ENCODE measurements at regions of chr15 and their contacts with region 1.

Region 1: DNA sequence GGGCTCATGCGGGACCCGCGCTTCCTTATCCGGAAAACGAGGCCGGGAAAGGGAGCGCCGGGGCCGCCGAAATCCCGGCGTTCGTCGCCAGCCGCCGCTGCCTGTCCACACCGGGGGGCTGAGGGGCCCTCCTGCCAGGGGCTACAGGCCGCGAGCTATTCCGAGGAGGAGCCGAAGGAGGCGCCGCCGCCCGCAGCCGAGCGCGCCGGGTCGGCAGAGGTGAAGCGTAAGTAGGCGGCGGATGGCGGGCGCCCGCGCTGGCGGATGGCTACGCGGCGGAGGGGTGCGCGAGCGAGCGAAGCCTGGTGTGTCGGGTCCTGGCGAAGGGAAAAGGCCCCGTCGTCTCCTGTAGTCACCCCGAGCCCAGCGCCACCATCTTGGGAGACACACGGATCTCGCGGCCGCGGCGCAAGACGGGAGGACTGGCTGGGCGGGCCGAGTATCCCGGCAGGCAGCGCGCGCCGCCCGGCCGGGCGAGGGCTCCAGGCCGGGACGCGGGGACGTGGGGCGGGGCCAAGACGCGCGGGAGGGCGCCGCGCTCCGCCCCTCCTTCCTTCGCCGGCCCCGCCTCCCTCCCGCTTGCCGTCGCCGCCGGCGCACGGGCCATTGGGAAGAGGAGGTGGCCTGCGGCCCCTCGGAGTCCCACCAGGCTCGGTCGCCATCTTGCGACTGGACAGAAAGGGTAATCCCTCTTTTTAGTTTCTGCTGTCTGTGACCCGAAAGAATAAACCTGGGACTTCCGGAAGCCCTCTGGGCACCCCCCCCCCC is at the start of gene UBE3A:
- DNase-seq: peak; percentile 91 to 93 (median 92)
- H3K4me3 ChIP-seq: peak within 1 kb of the TSS; percentile 75 to 99 (median 84)
- H3K27ac ChIP-seq: peak within 1 kb of the TSS; percentile 84 to 100 (median 99)
- H3K4me1 ChIP-seq: peaks cover 10 to 33% of the 10 kb centered on the region in 2 donors
- H3K27me3 ChIP-seq: no peaks in the 10 kb centered on the region
- CTCF ChIP-seq: peak in 3 of 6 experiments; percentile 21 to 33 (median 26)
- POLR2A ChIP-seq: peak; percentile 42 to 84
- total RNA-seq, gene UBE3A: 32.5 to 114 (median 85.8) TPM

Region 2: DNA sequence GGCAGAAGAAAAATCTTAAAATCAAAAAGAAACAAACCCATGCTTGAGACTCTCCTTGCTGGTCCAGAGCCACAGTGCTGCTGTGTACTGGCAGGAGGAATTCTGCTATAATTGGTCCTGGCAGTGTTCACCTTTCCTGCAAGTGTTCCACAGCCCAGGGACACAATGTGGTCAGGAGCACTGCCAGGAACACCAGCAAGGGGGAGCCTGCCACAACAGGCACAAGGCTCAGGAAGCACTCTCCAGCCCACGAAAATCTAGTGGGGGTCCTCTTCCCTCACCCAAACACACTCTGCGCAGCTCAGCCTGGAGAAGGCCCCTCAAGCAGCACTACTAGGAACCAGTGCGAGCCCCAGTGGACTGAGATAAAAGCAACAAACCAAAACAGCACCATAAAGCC is 92.8 kb before region 1 on chr15:
- intact Hi-C with region 1: loop called in 1 of 2 experiments (anchors 10 kb)
- DNase-seq: peak; percentile 19 to 61 (median 48)
- H3K4me3 ChIP-seq: no peak overlapping the region
- H3K27ac ChIP-seq: no peak overlapping the region
- H3K4me1 ChIP-seq: peaks cover 0 to 6% of the 10 kb centered on the region in 2 donors
- H3K27me3 ChIP-seq: no peaks in the 10 kb centered on the region
- CTCF ChIP-seq: peak in 2 of 6 experiments; percentile 14 to 26
- POLR2A ChIP-seq: no peak

Region 3: DNA sequence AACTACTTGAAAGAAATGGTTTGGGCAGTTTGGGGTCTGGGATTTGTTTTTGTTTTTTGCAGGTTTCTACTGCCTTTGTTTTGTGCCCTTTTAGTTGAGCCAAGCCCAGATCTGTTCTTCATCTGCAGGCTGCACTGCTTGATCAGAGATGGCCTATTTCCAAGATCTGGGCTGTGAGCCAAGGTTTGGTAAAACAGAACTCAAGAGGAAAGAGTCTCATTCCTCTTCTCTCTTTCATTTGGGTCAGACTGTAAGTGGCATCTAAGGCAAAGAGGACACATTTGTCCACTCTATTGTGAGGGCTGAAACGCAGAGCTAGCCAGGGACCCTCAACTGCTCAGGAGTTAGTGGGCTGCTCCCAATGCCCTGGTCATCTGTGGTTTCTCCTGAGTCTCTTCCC is 104.4 kb after region 1 on chr15:
- intact Hi-C with region 1: no loop called
- DNase-seq: peak; percentile 74 to 89 (median 83)
- H3K4me3 ChIP-seq: no peak overlapping the region
- H3K27ac ChIP-seq: no peak overlapping the region
- H3K4me1 ChIP-seq: peaks cover 0 to 9% of the 10 kb centered on the region in 2 donors
- H3K27me3 ChIP-seq: no peaks in the 10 kb centered on the region
- CTCF ChIP-seq: no peak
- POLR2A ChIP-seq: no peak

Measured in adrenal gland (tissue), 19 donors.